Vagina (tissue), 2 donors: ENCODE measurements at regions of chr5 and their contacts with region 1.

Region 1: GRCh38 chr5:146533882-146534281 is 17.9 kb upstream of the GPR151 start:
- DNase-seq: no peak
- H3K4me3 ChIP-seq: no peak overlapping the region
- H3K27ac ChIP-seq: no peak overlapping the region
- H3K4me1 ChIP-seq: no peaks in the 10 kb centered on the region
- H3K27me3 ChIP-seq: no peaks in the 10 kb centered on the region
- CTCF ChIP-seq: no peak
- POLR2A ChIP-seq: no peak

Region 2: GRCh38 chr5:147188200-147189108 is 654.6 kb after region 1 on chr5:
- intact Hi-C with region 1: loop called (anchors 2 kb)
- DNase-seq: no peak
- H3K4me3 ChIP-seq: peak overlapping the region in 1 of 2 donors; percentile 12
- H3K27ac ChIP-seq: no peak overlapping the region
- H3K4me1 ChIP-seq: no peaks in the 10 kb centered on the region
- H3K27me3 ChIP-seq: no peaks in the 10 kb centered on the region
- CTCF ChIP-seq: peak; percentile 28 to 71 (median 70)
- POLR2A ChIP-seq: no peak